CD8-positive, alpha-beta memory T cell (primary cell): ENCODE measurements at regions of chr15 and their contacts with region 1.

Region 1: GRCh38 chr15:78072080-78072892 is 5.2 kb downstream of the TBC1D2B start:
- DNase-seq: peak in 2 of 5 donors; percentile 53 to 65
- H3K4me3 ChIP-seq: peak overlapping the region; percentile 8
- H3K4me3 Mint-ChIP-seq: peak overlapping the region; percentile 13 to 79 (median 61)
- H3K27ac ChIP-seq: peak overlapping the region; percentile 3
- H3K27ac Mint-ChIP-seq: peak overlapping the region; percentile 24 to 95 (median 82)
- H3K4me1 ChIP-seq: peaks cover 75% of the 10 kb centered on the region
- H3K4me1 Mint-ChIP-seq: peaks cover 47 to 57% (median 50%) of the 10 kb centered on the region in 3 donors
- H3K27me3 ChIP-seq: no peaks in the 10 kb centered on the region
- H3K27me3 Mint-ChIP-seq: peaks cover 0 to 1% of the 10 kb centered on the region in 2 donors

Region 2: DNA sequence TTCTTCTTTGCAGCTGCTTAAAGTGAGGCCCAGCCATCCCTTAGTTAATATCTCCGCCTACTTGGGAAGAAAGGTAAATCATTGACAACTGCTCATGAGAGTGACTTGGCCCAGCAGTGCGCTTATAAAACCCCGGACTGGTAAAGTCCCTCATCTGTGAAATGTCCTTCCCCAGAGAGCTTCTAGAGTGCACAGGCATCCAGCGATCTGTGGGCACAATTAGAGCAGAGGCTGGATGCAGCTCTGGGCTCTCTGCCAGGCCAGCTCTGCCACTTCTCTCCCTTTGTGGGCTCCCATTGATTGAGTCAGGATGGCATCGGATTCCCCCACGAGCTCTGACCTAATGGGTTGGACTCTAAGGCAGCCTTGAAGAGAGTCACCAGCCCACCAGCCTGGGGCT is 220.6 kb before region 1 on chr15:
- CTCF ChIA-PET with region 1: no interaction called
- POLR2A ChIA-PET with region 1: no interaction called
- DNase-seq: no peak
- H3K4me3 ChIP-seq: no peak overlapping the region
- H3K4me3 Mint-ChIP-seq: no peak overlapping the region
- H3K27ac ChIP-seq: no peak overlapping the region
- H3K27ac Mint-ChIP-seq: no peak overlapping the region
- H3K4me1 ChIP-seq: no peaks in the 10 kb centered on the region
- H3K4me1 Mint-ChIP-seq: no peaks in the 10 kb centered on the region
- H3K27me3 ChIP-seq: no peaks in the 10 kb centered on the region
- H3K27me3 Mint-ChIP-seq: peaks cover 10 to 54% of the 10 kb centered on the region in 2 donors

Region 3: GRCh38 chr15:78059110-78059844 is 13.0 kb before region 1 on chr15:
- CTCF ChIA-PET with region 1: interaction called, 15 read pairs
- POLR2A ChIA-PET with region 1: interaction called, 8 read pairs
- DNase-seq: peak in 1 of 5 donors; percentile 30
- H3K4me3 ChIP-seq: no peak overlapping the region
- H3K4me3 Mint-ChIP-seq: peak overlapping the region in 4 of 7 donors; percentile 6 to 19 (median 12)
- H3K27ac ChIP-seq: no peak overlapping the region
- H3K27ac Mint-ChIP-seq: peak overlapping the region; percentile 76 to 89 (median 82)
- H3K4me1 ChIP-seq: peaks cover 94% of the 10 kb centered on the region
- H3K4me1 Mint-ChIP-seq: peaks cover 62 to 68% (median 66%) of the 10 kb centered on the region in 3 donors
- H3K27me3 ChIP-seq: no peaks in the 10 kb centered on the region
- H3K27me3 Mint-ChIP-seq: no peaks in the 10 kb centered on the region